ENCODE measurements at regions of chr11 and their contacts with region 1.

Region 1: GRCh38 chr11:288328-289144 is at the start of gene PGGHG:
- DNase-seq: peak in 7 of 9 experiments; percentile 53 to 78 (median 69)
- ATAC-seq: peak; percentile 25
- H3K4me3 ChIP-seq: peak within 1 kb of the TSS; percentile 56 to 94
- H3K4me3 Mint-ChIP-seq: peak within 1 kb of the TSS; percentile 99
- H3K27ac ChIP-seq: peak within 1 kb of the TSS; percentile 66 to 83
- H3K27ac Mint-ChIP-seq: peak within 1 kb of the TSS; percentile 99
- H3K4me1 ChIP-seq: peaks cover 55% of the 10 kb centered on the region
- H3K4me1 Mint-ChIP-seq: peaks cover 58% of the 10 kb centered on the region
- H3K27me3 ChIP-seq: peaks cover 0 to under 1% of the 10 kb centered on the region in 2 experiments
- H3K27me3 Mint-ChIP-seq: no peaks in the 10 kb centered on the region
- CTCF ChIP-seq: no peak
- total RNA-seq, gene PGGHG: 902 to 919 TPM

Region 2: GRCh38 chr11:269146-269890 is 19.2 kb before region 1 on chr11:
- CTCF ChIA-PET with region 1: interaction called, 6 read pairs
- POLR2A ChIA-PET with region 1: interaction called, 214 read pairs
- intact Hi-C with region 1: loop called (anchors 1 kb)
- DNase-seq: peak in 5 of 9 experiments; percentile 60 to 90 (median 77)
- ATAC-seq: peak; percentile 69
- H3K4me3 ChIP-seq: peak overlapping the region; percentile 38 to 60
- H3K4me3 Mint-ChIP-seq: peak overlapping the region; percentile 85
- H3K27ac ChIP-seq: peak overlapping the region; percentile 76 to 96
- H3K27ac Mint-ChIP-seq: peak overlapping the region; percentile 98
- H3K4me1 ChIP-seq: peaks cover 23% of the 10 kb centered on the region
- H3K4me1 Mint-ChIP-seq: peaks cover 30% of the 10 kb centered on the region
- H3K27me3 ChIP-seq: no peaks in the 10 kb centered on the region
- H3K27me3 Mint-ChIP-seq: no peaks in the 10 kb centered on the region
- CTCF ChIP-seq: no peak

Region 3: DNA sequence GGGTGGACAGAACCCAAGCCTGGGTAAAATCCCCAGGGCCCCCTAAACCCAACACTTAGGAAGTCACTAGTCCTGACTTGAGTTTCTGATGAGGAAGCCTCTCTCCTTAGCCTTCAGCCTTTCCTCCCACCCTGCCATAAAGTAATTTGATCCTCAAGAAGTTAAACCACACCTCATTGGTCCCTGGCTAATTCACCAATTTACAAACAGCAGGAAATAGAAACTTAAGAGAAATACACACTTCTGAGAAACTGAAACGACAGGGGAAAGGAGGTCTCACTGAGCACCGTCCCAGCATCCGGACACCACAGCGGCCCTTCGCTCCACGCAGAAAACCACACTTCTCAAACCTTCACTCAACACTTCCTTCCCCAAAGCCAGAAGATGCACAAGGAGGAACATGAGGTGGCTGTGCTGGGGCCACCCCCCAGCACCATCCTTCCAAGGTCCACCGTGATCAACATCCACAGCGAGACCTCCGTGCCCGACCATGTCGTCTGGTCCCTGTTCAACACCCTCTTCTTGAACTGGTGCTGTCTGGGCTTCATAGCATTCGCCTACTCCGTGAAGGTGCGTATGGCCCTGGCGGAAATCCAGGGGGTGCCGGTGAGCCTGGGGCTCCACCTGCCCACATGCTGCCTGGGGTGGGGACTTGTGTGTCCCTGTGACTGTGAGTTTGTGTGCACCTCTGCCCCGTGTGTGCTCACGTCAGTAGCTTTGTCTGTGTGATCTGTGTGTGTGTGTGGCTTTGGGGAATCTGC is 25.4 kb after region 1 on chr11 and contains the start of gene IFITM1:
- CTCF ChIA-PET with region 1: interaction called, 5 read pairs
- POLR2A ChIA-PET with region 1: interaction called, 24 read pairs
- intact Hi-C with region 1: loop called in 1 of 2 experiments (anchors 2 kb)
- DNase-seq: peak in 7 of 9 experiments; percentile 54 to 86 (median 71)
- ATAC-seq: peak; percentile 49
- H3K4me3 ChIP-seq: peak within 1 kb of the TSS; percentile 95 to 97
- H3K4me3 Mint-ChIP-seq: peak within 1 kb of the TSS; percentile 95
- H3K27ac ChIP-seq: peak within 1 kb of the TSS; percentile 83 to 88
- H3K27ac Mint-ChIP-seq: peak within 1 kb of the TSS; percentile 98
- H3K4me1 ChIP-seq: peaks cover 18% of the 10 kb centered on the region
- H3K4me1 Mint-ChIP-seq: peaks cover 45% of the 10 kb centered on the region
- H3K27me3 ChIP-seq: no peaks in the 10 kb centered on the region
- H3K27me3 Mint-ChIP-seq: no peaks in the 10 kb centered on the region
- CTCF ChIP-seq: no peak
- total RNA-seq, gene IFITM1: 223 to 251 TPM

Region 4: DNA sequence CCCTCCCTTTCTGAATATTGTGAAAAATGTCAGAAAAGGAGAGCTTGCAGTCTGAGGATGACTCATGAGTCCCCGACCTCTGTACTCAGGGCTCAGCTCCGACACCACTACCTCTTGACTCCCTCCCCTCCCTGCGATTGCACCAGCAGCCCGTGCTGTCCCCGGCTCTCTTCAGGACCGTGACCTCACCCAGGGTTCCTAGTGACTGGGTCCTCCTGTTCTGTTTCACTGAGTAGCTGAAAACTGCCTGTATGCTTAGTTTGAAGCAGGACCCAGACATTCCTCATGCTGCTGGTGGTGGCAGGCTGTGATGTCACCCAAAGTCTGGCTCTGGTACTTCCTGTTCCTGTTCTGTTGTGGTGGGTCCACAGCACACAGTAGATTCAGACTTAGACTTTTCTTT is 299.4 kb after region 1 on chr11:
- CTCF ChIA-PET with region 1: no interaction called
- POLR2A ChIA-PET with region 1: no interaction called
- intact Hi-C with region 1: no loop called
- DNase-seq: peak; percentile 42 to 95 (median 81)
- ATAC-seq: peak; percentile 95
- H3K4me3 ChIP-seq: peak overlapping the region in 1 of 2 experiments; percentile 3
- H3K4me3 Mint-ChIP-seq: peak overlapping the region; percentile 69
- H3K27ac ChIP-seq: peak overlapping the region; percentile 60 to 76
- H3K27ac Mint-ChIP-seq: peak overlapping the region; percentile 99
- H3K4me1 ChIP-seq: peaks cover 20% of the 10 kb centered on the region
- H3K4me1 Mint-ChIP-seq: peaks cover 29% of the 10 kb centered on the region
- H3K27me3 ChIP-seq: no peaks in the 10 kb centered on the region
- H3K27me3 Mint-ChIP-seq: no peaks in the 10 kb centered on the region
- CTCF ChIP-seq: no peak

Region 5: DNA sequence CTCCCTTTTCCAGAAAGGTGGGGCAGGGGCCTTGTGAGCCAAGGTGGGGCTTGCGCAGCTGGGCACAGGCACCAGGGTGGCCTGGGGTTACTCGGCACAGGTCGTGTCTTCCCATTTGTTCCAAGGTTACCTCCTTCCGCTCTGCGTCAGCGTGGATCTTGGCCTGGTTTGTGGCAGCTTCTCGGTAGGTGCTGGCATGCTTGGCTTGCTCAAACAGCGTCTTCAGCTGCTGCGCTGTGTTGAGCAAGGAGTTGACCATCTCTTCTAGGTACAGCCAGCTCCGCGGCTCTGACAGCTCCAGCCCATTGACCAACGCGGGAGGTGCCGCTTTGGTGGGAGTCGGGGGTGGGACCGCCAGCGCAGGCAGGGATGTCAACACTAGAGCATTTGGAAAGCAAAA is 385.9 kb after region 1 on chr11:
- CTCF ChIA-PET with region 1: no interaction called
- POLR2A ChIA-PET with region 1: no interaction called
- intact Hi-C with region 1: no loop called
- DNase-seq: no peak
- ATAC-seq: no peak
- H3K4me3 ChIP-seq: no peak overlapping the region
- H3K4me3 Mint-ChIP-seq: no peak overlapping the region
- H3K27ac ChIP-seq: no peak overlapping the region
- H3K27ac Mint-ChIP-seq: no peak overlapping the region
- H3K4me1 ChIP-seq: no peaks in the 10 kb centered on the region
- H3K4me1 Mint-ChIP-seq: no peaks in the 10 kb centered on the region
- H3K27me3 ChIP-seq: no peaks in the 10 kb centered on the region
- H3K27me3 Mint-ChIP-seq: no peaks in the 10 kb centered on the region
- CTCF ChIP-seq: no peak

Region 6: DNA sequence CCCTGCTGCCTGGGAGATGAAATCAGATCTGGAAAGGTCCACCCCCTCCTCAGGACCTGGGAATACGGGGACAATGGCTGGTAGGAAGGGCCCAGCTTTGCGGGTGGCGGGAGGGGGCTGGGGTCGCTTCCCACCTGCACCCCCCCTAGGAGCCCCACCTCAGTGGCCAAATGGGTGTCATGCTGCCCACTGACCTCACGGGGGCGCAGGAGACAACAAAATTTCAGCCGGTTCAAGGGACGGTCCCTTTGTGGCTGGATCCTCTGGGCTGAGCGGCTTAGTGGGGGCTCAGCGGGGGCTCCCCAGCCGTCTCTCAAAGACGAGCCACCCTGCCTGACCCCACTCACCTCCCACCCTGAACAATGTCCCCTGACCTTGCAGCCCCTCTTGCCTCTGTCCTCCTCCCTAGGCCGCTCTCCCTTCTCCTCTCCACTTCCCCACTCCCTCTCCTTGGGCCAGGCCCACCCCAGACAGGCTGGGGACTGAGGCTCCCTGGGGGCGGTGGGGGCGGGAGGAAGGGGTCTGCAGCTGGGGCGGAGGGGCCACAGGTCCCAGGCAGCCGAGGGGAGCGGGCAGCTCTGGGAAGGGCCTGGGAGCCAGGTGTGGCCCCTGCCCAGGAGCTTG is 1748.4 kb after region 1 on chr11:
- CTCF ChIA-PET with region 1: no interaction called
- POLR2A ChIA-PET with region 1: no interaction called
- intact Hi-C with region 1: no loop called
- DNase-seq: no peak
- ATAC-seq: peak; percentile 54
- H3K4me3 ChIP-seq: no peak overlapping the region
- H3K4me3 Mint-ChIP-seq: no peak overlapping the region
- H3K27ac ChIP-seq: no peak overlapping the region
- H3K27ac Mint-ChIP-seq: no peak overlapping the region
- H3K4me1 ChIP-seq: no peaks in the 10 kb centered on the region
- H3K4me1 Mint-ChIP-seq: no peaks in the 10 kb centered on the region
- H3K27me3 ChIP-seq: no peaks in the 10 kb centered on the region
- H3K27me3 Mint-ChIP-seq: no peaks in the 10 kb centered on the region
- CTCF ChIP-seq: no peak